MCF 10A (cell line): ENCODE measurements at regions of chr1 and their contacts with region 1.

Region 1: GRCh38 chr1:82225421-82226185 is 424.9 kb downstream of the ADGRL2 start:
- DNase-seq: peak; percentile 92
- H3K4me3 Mint-ChIP-seq: no peak overlapping the region
- H3K27ac Mint-ChIP-seq: peak overlapping the region; percentile 24
- H3K4me1 Mint-ChIP-seq: peaks cover 41% of the 10 kb centered on the region
- H3K27me3 Mint-ChIP-seq: no peaks in the 10 kb centered on the region
- CTCF ChIP-seq: no peak

Region 2: DNA sequence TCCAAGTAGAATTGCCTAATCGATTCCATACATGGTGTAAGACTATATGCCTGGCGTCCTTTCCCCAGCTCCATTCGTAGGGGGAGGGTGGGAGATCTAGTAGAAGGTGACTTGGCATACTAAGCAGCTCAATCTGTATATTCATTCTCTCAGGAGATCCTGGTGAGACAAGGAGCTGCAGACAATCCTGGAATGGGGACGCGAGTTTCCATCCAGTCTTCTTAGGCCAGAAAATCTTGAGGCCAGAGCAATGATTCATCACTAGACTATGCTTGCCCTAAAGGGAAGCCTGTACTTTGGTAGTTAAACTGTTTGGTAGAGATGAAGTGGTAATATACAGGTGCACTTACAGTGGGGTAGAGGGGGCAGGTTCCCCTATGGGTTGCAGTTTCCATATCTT is 43.8 kb after region 1 on chr1:
- CTCF ChIA-PET with region 1: no interaction called
- POLR2A ChIA-PET with region 1: interaction called, 10 read pairs
- intact Hi-C with region 1: no loop called
- DNase-seq: peak; percentile 80
- H3K4me3 Mint-ChIP-seq: no peak overlapping the region
- H3K27ac Mint-ChIP-seq: peak overlapping the region; percentile 64
- H3K4me1 Mint-ChIP-seq: peaks cover 19% of the 10 kb centered on the region
- H3K27me3 Mint-ChIP-seq: no peaks in the 10 kb centered on the region
- CTCF ChIP-seq: no peak

Region 3: DNA sequence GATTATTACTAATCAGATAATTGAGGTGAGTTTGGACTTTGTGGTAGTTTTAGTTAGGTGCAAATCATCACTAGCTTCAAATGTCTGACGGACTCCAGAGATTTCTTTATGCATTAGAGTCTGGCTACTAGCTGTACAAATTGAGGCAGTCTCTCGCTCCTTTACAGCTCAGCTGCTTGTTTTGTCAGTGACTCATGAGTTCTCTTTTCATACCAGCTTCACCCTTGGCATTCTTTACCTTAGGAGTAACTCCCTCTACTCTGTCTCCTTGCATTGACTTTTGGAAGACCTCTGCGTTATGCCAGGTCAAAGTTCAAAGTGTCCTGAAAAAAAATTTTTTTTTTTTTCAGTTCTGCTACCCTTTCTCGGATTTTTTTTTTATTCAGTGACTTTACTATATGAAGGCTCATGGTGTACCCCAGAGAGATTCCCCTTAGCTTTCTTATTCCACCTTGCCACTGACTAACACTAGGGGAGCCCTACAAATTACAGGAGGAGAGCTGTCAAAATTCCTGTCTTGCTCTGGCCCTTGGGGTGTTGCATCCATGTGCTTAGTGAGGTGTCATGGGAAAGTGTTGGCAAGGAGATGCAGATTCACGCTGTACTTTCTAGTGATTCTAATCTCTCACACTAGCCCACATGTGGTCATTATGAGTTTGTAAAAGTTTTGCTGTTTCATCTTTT is 151.7 kb after region 1 on chr1:
- CTCF ChIA-PET with region 1: no interaction called
- POLR2A ChIA-PET with region 1: interaction called, 6 read pairs
- intact Hi-C with region 1: loop called (anchors 5 kb)
- DNase-seq: peak; percentile 83
- H3K4me3 Mint-ChIP-seq: no peak overlapping the region
- H3K27ac Mint-ChIP-seq: peak overlapping the region; percentile 80
- H3K4me1 Mint-ChIP-seq: peaks cover 19% of the 10 kb centered on the region
- H3K27me3 Mint-ChIP-seq: no peaks in the 10 kb centered on the region
- CTCF ChIP-seq: no peak